ENCODE measurements at regions of chr9 and their contacts with region 1.

Region 1: DNA sequence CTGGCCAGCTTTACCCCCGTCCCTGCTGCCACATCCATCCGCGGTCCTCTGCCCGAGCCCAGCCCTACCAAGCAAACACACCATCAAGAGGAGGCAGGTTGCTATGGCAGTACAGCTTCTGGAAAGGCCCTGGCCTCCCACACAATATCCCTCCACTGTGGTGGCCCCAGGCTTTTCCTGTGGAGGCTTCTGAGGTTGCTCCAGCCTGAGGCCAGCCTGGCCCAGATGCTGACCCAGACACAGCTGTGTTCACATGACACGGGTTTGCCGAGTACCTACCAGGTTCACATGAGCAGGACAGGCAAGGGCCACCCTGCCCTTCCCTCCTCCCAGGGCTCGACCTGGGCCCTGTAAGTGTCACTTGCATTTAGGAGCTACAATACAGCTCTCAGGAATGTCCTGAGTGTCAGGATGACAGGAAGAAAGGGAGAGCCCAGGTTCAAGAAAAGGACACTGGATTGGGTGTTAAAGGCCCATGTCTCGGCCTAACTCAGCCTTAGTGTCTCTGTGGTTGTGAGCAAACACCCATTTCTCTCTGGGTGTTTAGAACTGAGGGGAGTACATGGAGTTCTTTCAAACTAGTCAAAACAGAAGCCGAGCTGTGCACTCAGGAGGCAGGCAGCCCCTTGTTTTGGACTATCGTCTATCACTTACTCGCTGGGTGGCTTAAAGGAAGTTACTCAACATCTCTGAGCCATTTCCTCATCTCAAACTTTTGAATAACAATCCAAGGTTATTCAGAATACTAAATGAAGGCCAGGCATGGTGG is 40.2 kb downstream of the NAIF1 start:
- DNase-seq: peak; percentile 55
- H3K4me3 Mint-ChIP-seq: peak overlapping the region; percentile 73
- H3K27ac Mint-ChIP-seq: peak overlapping the region; percentile 99
- H3K4me1 Mint-ChIP-seq: peaks cover 93% of the 10 kb centered on the region
- H3K27me3 Mint-ChIP-seq: no peaks in the 10 kb centered on the region

Region 2: GRCh38 chr9:127955294-127956035 is 71.5 kb before region 1 on chr9:
- CTCF ChIA-PET with region 1: interaction called, 112 read pairs
- POLR2A ChIA-PET with region 1: interaction called, 52 read pairs
- DNase-seq: peak; percentile 81
- H3K4me3 Mint-ChIP-seq: peak overlapping the region; percentile 31
- H3K27ac Mint-ChIP-seq: peak overlapping the region; percentile 66
- H3K4me1 Mint-ChIP-seq: peaks cover 72% of the 10 kb centered on the region
- H3K27me3 Mint-ChIP-seq: no peaks in the 10 kb centered on the region

Region 3: DNA sequence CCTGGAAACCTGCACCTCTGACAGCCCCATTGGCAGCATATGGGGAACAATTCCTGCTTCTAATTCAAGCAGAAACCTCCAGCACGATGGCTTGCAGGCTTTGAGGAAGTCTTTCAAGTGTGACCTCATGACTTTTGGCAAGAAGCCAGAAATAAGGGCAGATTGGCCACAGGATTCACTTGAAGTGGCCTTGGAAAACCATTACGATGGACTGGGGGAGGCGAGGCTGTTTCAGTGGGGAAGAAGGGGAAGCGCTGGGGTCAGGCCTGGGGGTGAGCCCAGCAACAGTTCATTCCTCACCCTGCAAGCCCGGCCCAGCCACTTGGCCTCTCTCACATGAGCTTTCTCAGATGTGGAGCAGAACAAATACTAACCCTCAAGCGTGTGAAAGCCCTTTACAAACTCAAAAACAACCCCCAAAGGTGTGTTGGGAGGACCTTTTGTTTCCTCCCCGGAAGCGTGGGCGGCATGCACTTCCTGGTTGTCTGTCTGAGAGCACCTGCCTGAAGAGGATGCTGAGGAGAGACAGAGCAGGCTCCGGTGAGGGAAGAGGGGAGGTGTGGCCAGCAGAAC is 19.3 kb before region 1 on chr9:
- CTCF ChIA-PET with region 1: interaction called, 6 read pairs
- POLR2A ChIA-PET with region 1: interaction called, 67 read pairs
- DNase-seq: peak; percentile 82
- H3K4me3 Mint-ChIP-seq: peak overlapping the region; percentile 61
- H3K27ac Mint-ChIP-seq: peak overlapping the region; percentile 89
- H3K4me1 Mint-ChIP-seq: peaks cover 43% of the 10 kb centered on the region
- H3K27me3 Mint-ChIP-seq: peaks cover 2% of the 10 kb centered on the region

Region 4: DNA sequence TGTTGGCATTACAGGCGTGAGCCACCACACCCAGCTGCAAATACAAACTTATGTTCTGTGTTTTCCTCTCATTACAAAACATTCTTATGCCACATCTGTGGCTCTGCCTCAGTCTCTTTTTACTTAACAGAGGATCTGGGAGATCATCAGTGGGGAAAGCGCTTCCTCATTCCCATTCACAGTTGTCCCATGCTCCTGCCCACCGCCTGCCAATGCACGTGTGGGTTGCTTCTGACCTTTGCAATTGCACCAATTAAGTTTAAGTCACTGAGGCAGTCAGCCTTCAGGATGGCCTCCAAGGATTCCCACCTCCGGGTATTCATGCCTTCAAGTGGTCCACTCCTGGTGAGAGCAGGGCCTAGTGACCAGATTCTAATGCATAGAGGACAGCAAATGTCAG is 11.3 kb before region 1 on chr9:
- CTCF ChIA-PET with region 1: no interaction called
- POLR2A ChIA-PET with region 1: interaction called, 67 read pairs
- DNase-seq: no peak
- H3K4me3 Mint-ChIP-seq: no peak overlapping the region
- H3K27ac Mint-ChIP-seq: no peak overlapping the region
- H3K4me1 Mint-ChIP-seq: peaks cover 14% of the 10 kb centered on the region
- H3K27me3 Mint-ChIP-seq: peaks cover 5% of the 10 kb centered on the region